Endothelial cell of umbilical vein (primary cell): ENCODE measurements at regions of chr13 and their contacts with region 1.

Region 1: DNA sequence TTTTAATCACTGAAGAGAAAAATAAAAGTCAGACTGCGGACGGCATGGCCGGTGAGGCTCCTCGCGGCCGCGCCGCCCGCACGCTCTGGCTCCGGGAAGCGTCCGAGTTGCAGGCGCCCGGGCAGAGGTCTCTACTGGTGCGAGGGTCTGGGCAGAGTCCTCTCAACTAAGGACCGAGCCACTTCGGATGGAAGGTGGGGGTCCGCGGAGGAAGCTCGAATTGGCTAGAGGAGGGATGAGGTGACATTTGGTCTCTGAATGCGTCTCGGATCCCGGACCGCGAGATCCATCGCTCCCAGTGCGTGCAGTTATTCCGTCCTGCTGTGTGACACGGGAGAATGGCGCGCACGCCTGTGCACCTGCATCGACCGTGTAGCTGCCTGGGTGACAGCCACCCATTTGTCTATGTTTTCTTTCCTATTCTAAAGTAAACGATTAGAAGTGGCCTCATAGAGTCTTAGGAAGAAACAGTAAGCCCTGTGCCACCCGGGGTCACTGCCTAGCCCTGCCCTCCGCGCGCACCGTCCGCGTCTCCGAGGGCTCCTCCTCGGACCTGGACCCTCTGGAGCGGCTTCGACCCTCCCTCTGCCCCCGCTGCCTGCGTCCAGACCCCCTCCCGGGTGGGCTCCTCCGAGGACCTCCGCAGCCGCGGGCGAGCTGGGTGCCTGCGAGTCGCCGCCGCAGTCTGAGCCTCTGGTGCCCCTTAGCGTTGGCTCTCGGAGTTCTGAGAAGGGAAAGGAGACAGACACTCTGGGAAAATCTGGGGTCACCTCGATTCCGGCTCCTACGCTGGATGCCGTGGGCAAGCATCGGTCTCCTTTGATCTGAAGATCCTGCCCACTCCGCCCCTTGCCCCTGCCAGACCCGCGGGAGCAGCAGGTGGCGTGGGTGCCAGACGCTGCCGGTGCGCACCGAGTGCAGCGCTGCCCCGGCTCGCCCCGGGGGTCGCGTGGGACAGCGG is 347.4 kb downstream of the LIG4 start:
- DNase-seq: peak; percentile 64
- H3K4me3 ChIP-seq: peak overlapping the region; percentile 51 to 82 (median 54)
- H3K27ac ChIP-seq: peak overlapping the region; percentile 56
- H3K4me1 ChIP-seq: peaks cover 15% of the 10 kb centered on the region
- H3K27me3 ChIP-seq: peaks cover 5 to 8% of the 10 kb centered on the region in 2 experiments
- CTCF ChIP-seq: peak; percentile 52 to 77
- POLR2A ChIP-seq: no peak

Region 2: GRCh38 chr13:107211073-107211472 is 656.9 kb before region 1 on chr13:
- CTCF ChIA-PET with region 1: interaction called, 7 read pairs
- POLR2A ChIA-PET with region 1: no interaction called
- dilution Hi-C with region 1: no loop called
- intact Hi-C with region 1: loop called (anchors 1 kb)
- DNase-seq: peak; percentile 92
- H3K4me3 ChIP-seq: no peak overlapping the region
- H3K27ac ChIP-seq: no peak overlapping the region
- H3K4me1 ChIP-seq: peaks cover 13% of the 10 kb centered on the region
- H3K27me3 ChIP-seq: no peaks in the 10 kb centered on the region
- CTCF ChIP-seq: peak; percentile 84 to 92
- POLR2A ChIP-seq: no peak

Region 3: GRCh38 chr13:107373551-107373950 is 494.4 kb before region 1 on chr13:
- CTCF ChIA-PET with region 1: interaction called, 7 read pairs
- POLR2A ChIA-PET with region 1: no interaction called
- dilution Hi-C with region 1: no loop called
- intact Hi-C with region 1: loop called (anchors 1 kb)
- DNase-seq: peak; percentile 91
- H3K4me3 ChIP-seq: no peak overlapping the region
- H3K27ac ChIP-seq: no peak overlapping the region
- H3K4me1 ChIP-seq: peaks cover 36% of the 10 kb centered on the region
- H3K27me3 ChIP-seq: no peaks in the 10 kb centered on the region
- CTCF ChIP-seq: peak; percentile 59 to 63
- POLR2A ChIP-seq: no peak

Region 4: GRCh38 chr13:107650081-107650701 is 217.8 kb before region 1 on chr13:
- CTCF ChIA-PET with region 1: interaction called, 7 read pairs
- POLR2A ChIA-PET with region 1: no interaction called
- dilution Hi-C with region 1: no loop called
- intact Hi-C with region 1: loop called (anchors 1 kb)
- DNase-seq: peak; percentile 78
- H3K4me3 ChIP-seq: no peak overlapping the region
- H3K27ac ChIP-seq: no peak overlapping the region
- H3K4me1 ChIP-seq: peaks cover 4% of the 10 kb centered on the region
- H3K27me3 ChIP-seq: no peaks in the 10 kb centered on the region
- CTCF ChIP-seq: peak; percentile 82 to 93
- POLR2A ChIP-seq: no peak

Region 5: DNA sequence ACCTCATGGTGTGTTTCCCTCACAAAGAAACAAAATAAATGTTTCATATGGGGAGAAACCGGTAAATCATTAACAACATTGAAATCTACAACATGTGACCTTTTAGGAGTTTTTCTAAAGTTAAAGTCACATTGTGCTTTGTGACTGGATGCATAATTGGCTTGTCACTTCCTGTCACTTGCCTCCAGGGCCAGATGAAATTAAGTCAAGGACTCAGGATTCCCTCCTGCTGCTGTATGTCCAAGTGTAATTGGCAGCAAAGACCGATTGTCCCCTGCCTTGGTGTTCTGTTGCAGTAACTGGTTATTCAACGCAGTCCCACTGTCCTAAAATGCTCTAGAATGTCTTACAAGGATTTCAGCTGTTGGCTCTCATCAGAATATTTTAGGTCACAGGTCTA is 100.9 kb before region 1 on chr13:
- CTCF ChIA-PET with region 1: no interaction called
- POLR2A ChIA-PET with region 1: no interaction called
- dilution Hi-C with region 1: no loop called
- intact Hi-C with region 1: loop called (anchors 2 kb)
- DNase-seq: peak; percentile 39
- H3K4me3 ChIP-seq: no peak overlapping the region
- H3K27ac ChIP-seq: peak overlapping the region; percentile 70
- H3K4me1 ChIP-seq: peaks cover 23% of the 10 kb centered on the region
- H3K27me3 ChIP-seq: no peaks in the 10 kb centered on the region
- CTCF ChIP-seq: no peak
- POLR2A ChIP-seq: no peak